ENCODE measurements at regions of chr16 and their contacts with region 1.

Region 1: GRCh38 chr16:28187595-28188004 is 24.2 kb downstream of the XPO6 start:
- DNase-seq: peak in 1 of 2 donors; percentile 70
- ATAC-seq: peak; percentile 64 to 71 (median 65)
- H3K4me3 ChIP-seq: no peak overlapping the region
- H3K4me3 Mint-ChIP-seq: peak overlapping the region; percentile 83
- H3K27ac ChIP-seq: peak overlapping the region; percentile 76
- H3K27ac Mint-ChIP-seq: peak overlapping the region; percentile 94 to 96
- H3K4me1 ChIP-seq: peaks cover 40% of the 10 kb centered on the region
- H3K4me1 Mint-ChIP-seq: peaks cover 77 to 88% of the 10 kb centered on the region in 2 donors
- H3K27me3 ChIP-seq: no peaks in the 10 kb centered on the region
- H3K27me3 Mint-ChIP-seq: no peaks in the 10 kb centered on the region
- CTCF ChIP-seq: no peak

Region 2: GRCh38 chr16:27839419-27839818 is 348.2 kb before region 1 on chr16:
- intact Hi-C with region 1: no loop called
- DNase-seq: no peak
- ATAC-seq: no peak
- H3K4me3 ChIP-seq: no peak overlapping the region
- H3K4me3 Mint-ChIP-seq: no peak overlapping the region
- H3K27ac ChIP-seq: no peak overlapping the region
- H3K27ac Mint-ChIP-seq: no peak overlapping the region
- H3K4me1 ChIP-seq: no peaks in the 10 kb centered on the region
- H3K4me1 Mint-ChIP-seq: no peaks in the 10 kb centered on the region
- H3K27me3 ChIP-seq: no peaks in the 10 kb centered on the region
- H3K27me3 Mint-ChIP-seq: peaks cover 12 to 41% of the 10 kb centered on the region in 2 donors
- CTCF ChIP-seq: no peak

Region 3: DNA sequence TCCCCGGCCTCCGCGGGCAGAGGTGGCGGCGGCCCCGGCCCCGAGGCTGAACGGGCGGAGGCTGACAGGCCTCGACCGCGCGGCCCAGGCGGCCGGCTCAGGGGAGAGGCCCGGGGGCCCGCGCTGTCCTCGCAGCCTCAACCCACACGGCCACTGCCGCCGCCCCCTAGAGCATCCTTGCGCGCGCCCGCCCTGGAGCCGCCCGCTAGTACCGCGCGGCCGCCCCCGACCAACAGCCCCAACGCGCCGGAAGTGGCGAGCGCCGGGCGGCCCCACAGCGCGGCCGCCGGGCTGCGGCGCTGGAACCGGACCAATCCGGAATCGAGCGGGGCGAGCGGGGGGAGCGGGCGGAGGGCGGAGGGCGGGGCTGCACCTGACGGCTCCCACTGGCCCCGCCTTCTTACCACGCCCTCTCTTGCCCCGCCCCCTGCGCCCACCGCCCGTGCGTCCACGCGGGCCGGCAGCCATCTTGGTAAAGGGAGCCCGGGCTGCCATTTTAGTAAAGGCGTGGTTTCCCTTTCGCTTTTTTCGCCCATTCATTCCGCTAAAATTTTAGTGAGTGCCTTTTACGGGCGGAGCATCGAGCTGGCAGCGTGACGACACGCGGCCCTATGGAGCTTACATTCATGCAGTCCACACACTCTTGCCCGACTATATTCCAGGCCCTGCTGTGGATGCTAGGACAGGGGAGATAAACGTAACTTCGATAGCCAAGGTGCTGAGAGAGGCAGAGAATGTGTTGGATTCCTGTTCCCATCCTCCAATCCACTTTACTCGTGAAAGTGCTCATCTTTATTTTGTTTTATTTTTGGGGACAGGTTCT is 24.3 kb after region 1 on chr16 and contains the start of gene XPO6:
- intact Hi-C with region 1: loop called (anchors 2 kb)
- DNase-seq: peak; percentile 98 to 99
- ATAC-seq: peak; percentile 87 to 98 (median 89)
- H3K4me3 ChIP-seq: peak within 1 kb of the TSS; percentile 79
- H3K4me3 Mint-ChIP-seq: peak within 1 kb of the TSS; percentile 94
- H3K27ac ChIP-seq: peak within 1 kb of the TSS; percentile 78
- H3K27ac Mint-ChIP-seq: peak within 1 kb of the TSS; percentile 84 to 89
- H3K4me1 ChIP-seq: peaks cover 32% of the 10 kb centered on the region
- H3K4me1 Mint-ChIP-seq: peaks cover 41% of the 10 kb centered on the region in 2 donors
- H3K27me3 ChIP-seq: no peaks in the 10 kb centered on the region
- H3K27me3 Mint-ChIP-seq: no peaks in the 10 kb centered on the region
- CTCF ChIP-seq: no peak
- total RNA-seq, gene XPO6: 233 to 321 (median 240) TPM